ENCODE measurements at regions of chr21 and their contacts with region 1.

Region 1: DNA sequence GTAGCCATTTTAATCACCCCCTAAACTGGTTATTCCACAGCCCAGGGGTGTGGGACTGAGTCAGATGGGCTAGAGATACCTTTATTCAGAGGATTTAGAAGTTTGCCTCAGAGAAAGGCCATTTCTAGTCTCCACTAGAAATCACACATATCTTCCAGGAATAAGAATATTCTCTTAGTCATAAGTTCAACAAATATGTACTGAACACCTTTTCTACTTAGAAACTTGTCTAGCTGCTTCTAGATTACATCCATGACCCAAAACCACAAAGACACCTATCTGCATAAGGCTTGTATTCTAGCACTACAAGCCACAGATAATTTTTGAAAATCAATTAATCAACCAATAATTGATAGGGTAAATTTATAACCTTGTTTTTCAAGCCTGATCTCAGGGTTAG is 38.7 kb downstream of the ERG start:
- DNase-seq: no peak
- ATAC-seq: no peak

Region 2: DNA sequence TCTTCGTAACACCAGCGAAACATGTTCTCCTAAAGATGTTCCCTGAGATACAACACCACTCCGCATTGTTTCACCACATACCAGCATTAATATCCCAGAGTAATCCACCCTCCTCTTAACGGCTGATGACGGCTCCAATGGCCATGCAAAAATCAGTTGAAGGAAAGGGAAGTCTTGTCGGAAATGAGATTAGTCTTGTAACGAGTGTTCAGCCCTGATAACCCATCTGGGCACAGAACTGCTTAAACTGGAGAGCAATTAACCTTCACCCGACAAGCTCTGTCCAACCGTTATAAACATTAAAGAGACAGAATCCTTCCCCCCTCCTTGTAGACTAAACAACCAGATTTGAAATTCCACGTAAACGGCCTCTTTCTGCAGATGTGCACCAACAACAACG is 16.8 kb after region 1 on chr21:
- intact Hi-C with region 1: loop called (anchors 1 kb)
- DNase-seq: no peak
- ATAC-seq: peak; percentile 55

Measured in sciatic nerve (tissue), 2 donors.